Activated CD4-positive, alpha-beta memory T cell treated with anti-CD3 and anti-CD28 coated beads for 36 hours (primary cell): ENCODE measurements at regions of chr19 and their contacts with region 1.

Region 1: DNA sequence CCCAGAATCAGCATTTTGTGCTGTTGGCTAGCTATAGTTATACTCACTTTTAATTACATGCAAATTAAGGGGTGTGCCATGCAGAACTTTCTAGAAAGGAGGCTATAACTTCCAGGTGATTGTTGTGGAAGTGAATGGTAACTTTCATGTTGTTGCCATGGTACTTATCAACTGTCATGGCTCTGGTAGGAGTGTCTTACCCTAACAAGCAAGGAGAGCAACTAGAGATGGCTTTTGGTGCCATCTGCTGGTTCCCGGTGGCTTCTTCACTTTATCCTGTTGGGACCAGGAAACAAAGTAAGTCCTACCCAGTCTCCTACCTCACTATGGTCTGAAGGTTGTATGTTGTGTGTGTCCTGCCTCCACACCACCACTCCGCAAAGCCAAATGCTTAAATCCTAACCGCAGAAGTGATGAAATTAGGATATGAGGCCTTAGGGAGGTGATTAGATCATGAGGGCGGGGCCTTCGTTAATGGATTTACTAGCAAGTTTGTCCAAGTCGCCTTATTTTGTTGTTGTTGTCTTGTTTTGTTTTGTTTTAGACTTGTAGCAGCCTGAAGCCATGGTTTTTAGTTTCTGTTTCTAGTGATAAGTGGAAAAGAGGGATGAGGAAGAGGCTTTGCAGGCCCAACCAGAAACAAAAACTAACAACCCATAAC is 22.6 kb downstream of the FBXL12 start:
- DNase-seq: peak; percentile 92
- H3K4me3 Mint-ChIP-seq: no peak overlapping the region
- H3K27ac Mint-ChIP-seq: peak overlapping the region; percentile 64
- H3K4me1 Mint-ChIP-seq: peaks cover 19% of the 10 kb centered on the region
- H3K27me3 Mint-ChIP-seq: no peaks in the 10 kb centered on the region

Region 2: GRCh38 chr19:9205501-9206113 is 590.6 kb before region 1 on chr19:
- CTCF ChIA-PET with region 1: interaction called, 3 read pairs
- POLR2A ChIA-PET with region 1: no interaction called
- intact Hi-C with region 1: loop called (anchors 2 kb)
- DNase-seq: peak; percentile 76
- H3K4me3 Mint-ChIP-seq: peak overlapping the region; percentile 23
- H3K27ac Mint-ChIP-seq: no peak overlapping the region
- H3K4me1 Mint-ChIP-seq: peaks cover 2% of the 10 kb centered on the region
- H3K27me3 Mint-ChIP-seq: peaks cover 4% of the 10 kb centered on the region

Region 3: GRCh38 chr19:9323919-9324583 is 472.2 kb before region 1 on chr19 and contains the start of gene ZNF559:
- CTCF ChIA-PET with region 1: no interaction called
- POLR2A ChIA-PET with region 1: no interaction called
- intact Hi-C with region 1: loop called (anchors 5 kb)
- DNase-seq: peak; percentile 98
- H3K4me3 Mint-ChIP-seq: peak within 1 kb of the TSS; percentile 83
- H3K27ac Mint-ChIP-seq: peak within 1 kb of the TSS; percentile 92
- H3K4me1 Mint-ChIP-seq: peaks cover 24% of the 10 kb centered on the region
- H3K27me3 Mint-ChIP-seq: no peaks in the 10 kb centered on the region
- total RNA-seq, gene ZNF559: 8.0 to 9.4 TPM

Region 4: GRCh38 chr19:9584073-9584833 is 212.0 kb before region 1 on chr19 and contains the start of gene ZNF121:
- CTCF ChIA-PET with region 1: interaction called, 10 read pairs
- POLR2A ChIA-PET with region 1: no interaction called
- intact Hi-C with region 1: loop called (anchors 1 kb)
- DNase-seq: peak; percentile 90
- H3K4me3 Mint-ChIP-seq: peak within 1 kb of the TSS; percentile 93
- H3K27ac Mint-ChIP-seq: peak within 1 kb of the TSS; percentile 93
- H3K4me1 Mint-ChIP-seq: peaks cover 31% of the 10 kb centered on the region
- H3K27me3 Mint-ChIP-seq: peaks cover 6% of the 10 kb centered on the region
- total RNA-seq, gene ZNF121: 61.1 to 62.2 TPM

Region 5: DNA sequence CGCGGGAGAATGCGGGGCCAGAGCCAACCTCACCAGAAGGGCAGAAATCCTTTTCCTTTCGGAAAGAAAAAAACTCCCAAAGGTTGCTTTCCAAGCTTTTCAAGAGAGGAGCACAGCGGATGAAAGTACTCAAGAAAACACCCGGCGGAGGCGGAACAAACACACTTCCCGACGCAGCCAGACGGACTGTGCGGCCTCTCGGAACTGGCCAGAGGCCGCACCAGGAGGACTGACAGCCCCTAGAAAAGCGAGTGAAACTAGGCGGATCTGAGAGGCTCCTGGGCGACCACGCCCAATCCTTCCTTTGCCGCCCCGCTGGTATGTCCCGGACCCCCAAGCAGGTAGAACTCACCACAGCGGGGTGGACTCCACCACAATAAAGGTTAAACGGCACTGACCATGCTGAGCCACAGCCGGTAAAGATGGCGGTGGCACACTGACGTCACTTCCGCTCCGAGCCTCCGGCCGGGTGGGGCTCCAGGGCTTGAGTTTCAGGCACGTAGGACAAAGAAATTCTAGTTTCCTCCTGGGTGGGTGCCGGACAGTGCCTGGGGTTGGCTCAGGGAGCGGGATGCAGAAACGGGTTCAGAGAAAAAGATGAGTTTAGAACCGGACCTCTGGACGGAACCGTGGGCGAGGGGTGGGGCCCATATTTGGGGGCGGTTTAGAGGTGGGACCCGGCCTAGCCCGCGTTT is 121.4 kb before region 1 on chr19 and contains the start of gene ZNF562:
- CTCF ChIA-PET with region 1: no interaction called
- POLR2A ChIA-PET with region 1: no interaction called
- intact Hi-C with region 1: loop called (anchors 2 kb)
- DNase-seq: peak; percentile 89
- H3K4me3 Mint-ChIP-seq: peak within 1 kb of the TSS; percentile 96
- H3K27ac Mint-ChIP-seq: peak within 1 kb of the TSS; percentile 92
- H3K4me1 Mint-ChIP-seq: peaks cover 26% of the 10 kb centered on the region
- H3K27me3 Mint-ChIP-seq: no peaks in the 10 kb centered on the region
- total RNA-seq, gene ZNF562: 35.3 to 36.1 TPM

Region 6: DNA sequence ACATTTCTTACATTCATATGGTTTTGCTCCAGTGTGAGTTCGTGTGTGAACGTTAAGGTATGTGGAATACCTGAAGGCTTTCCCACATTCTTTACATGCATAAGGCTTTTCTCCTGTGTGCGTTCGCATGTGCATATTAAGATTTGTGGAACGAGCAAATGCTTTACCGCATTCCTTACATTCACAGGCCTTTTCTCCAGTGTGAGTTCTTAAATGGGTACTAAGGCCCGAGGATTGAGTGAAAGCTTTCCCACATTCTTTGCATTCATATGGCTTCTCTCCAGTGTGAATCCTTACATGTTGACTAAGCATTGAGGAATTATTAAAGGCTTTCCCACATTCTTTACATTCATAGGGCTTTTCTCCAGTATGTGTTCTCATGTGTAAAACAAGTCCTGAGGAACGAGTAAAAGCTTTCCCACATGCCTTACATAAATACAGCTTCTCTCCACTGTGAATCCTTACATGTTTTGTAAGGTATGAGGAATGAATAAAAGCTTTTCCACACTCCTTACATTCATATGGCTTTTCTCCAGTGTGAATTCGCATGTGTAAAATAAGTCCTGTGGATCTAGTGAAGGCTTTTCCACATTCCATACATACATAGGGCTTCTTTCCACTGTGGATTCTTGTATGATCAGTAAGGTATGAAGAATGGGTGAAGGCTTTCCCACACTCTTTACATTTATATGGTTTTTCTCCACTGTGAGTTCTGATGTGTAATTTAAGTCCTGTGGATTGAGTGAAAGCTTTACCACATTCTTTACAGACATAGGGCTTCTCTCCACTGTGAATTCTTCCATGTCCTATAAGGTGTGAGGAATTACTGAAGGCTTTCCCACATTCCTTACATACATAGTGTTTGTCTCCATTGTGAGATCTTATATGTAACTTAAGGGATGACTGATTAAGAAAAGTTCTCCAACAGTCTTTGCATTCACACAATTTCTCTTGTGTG is 38.4 kb before region 1 on chr19:
- CTCF ChIA-PET with region 1: no interaction called
- POLR2A ChIA-PET with region 1: no interaction called
- intact Hi-C with region 1: no loop called
- DNase-seq: no peak
- H3K4me3 Mint-ChIP-seq: no peak overlapping the region
- H3K27ac Mint-ChIP-seq: no peak overlapping the region
- H3K4me1 Mint-ChIP-seq: no peaks in the 10 kb centered on the region
- H3K27me3 Mint-ChIP-seq: no peaks in the 10 kb centered on the region

Region 7: DNA sequence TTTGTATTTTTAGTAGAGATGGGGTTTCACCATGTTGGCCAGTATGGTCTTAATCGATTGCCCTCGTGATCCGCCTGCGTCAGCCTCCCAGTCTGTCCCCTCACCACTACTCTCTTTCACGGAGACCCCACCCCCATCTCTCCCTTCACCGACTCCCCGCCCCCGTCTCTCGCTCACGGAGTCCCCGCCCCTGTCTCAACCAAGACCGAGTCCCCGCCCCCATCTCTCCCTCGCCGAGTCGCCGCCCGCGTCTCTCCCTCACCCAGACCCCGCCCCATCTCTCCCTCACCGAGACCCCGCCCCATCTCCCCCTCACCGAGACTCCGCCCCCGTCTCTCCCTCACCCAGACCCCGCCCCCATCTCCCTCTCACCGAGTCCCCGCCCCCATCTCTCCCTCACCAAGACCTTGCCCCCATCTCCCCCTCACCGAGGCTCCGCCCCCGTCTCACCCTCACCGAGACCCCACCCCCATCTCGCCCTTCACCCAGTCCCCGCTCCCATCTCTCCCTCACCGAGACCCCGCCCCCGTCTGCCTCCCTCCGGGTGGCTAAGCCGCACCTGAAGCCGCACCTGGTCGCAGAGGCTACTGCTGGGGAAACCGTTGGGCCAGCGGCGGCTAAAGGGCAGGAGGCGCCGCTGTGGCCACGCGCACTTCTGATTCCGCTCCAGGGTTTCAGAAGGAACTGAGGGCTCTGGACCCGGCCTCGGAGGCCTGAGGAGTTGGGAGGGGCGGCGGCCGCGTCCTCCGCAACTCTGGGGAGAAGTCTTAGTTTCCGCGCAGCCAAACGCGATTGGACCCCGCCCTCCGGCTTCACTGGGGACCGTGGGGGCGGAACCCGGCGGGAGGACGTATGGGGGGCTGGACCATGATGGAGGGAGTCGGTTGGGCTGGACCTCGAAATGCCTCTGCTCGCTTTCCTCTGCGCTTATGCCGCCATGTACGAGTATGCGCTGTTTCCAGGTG is 10.6 kb before region 1 on chr19:
- CTCF ChIA-PET with region 1: no interaction called
- POLR2A ChIA-PET with region 1: no interaction called
- intact Hi-C with region 1: loop called (anchors 1 kb)
- DNase-seq: peak; percentile 99
- H3K4me3 Mint-ChIP-seq: peak overlapping the region; percentile 84
- H3K27ac Mint-ChIP-seq: peak overlapping the region; percentile 85
- H3K4me1 Mint-ChIP-seq: peaks cover 16% of the 10 kb centered on the region
- H3K27me3 Mint-ChIP-seq: no peaks in the 10 kb centered on the region